Endothelial cell of umbilical vein (primary cell): ENCODE measurements at regions of chr21 and their contacts with region 1.

Region 1: GRCh38 chr21:41816220-41817165 is 49.6 kb upstream of the RIPK4 start:
- DNase-seq: peak; percentile 54
- H3K4me3 ChIP-seq: no peak overlapping the region
- H3K27ac ChIP-seq: no peak overlapping the region
- H3K4me1 ChIP-seq: no peaks in the 10 kb centered on the region
- H3K27me3 ChIP-seq: no peaks in the 10 kb centered on the region
- CTCF ChIP-seq: peak; percentile 82 to 90
- POLR2A ChIP-seq: no peak

Region 2: DNA sequence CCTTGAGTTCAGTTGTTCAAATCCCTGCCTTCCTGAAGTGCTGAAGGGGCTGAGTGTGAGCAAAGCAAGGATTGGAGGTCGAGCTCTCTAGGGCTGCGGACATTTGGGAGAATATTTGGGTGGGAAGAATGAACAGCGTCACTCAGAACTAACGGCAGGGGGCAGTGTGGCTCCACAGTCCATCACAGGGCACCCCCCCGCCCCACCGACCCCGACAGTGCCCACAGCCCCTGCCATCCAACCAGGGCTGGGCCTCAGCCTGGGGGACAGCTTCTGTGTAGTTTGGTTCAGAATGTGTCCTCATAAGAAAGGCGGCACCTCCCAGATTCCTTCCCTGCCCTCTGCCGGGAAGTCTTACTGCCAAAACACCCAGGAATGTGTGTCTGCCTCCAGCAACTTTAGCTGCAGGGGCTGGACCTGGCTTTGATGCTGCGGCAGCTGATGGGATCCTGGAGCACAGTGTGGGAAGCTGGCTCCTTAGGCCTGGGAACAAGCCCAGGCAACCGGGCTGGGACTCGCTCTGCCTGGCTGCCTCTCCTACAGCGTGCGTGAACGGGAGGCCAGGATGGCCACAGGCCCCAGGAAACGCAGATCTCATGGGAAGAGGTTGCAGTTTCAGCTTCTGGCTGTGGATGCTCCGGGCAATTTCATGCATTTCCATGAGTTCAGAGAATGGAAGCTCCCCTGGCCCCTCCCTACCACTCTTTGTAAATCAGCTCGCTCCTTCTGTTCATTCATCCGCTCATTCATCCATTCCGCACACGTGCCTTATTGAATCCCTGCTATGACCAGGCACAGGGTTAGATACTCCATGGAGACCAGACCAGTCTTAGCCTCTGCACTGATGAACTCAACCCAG is 203.6 kb before region 1 on chr21:
- CTCF ChIA-PET with region 1: interaction called, 18 read pairs
- POLR2A ChIA-PET with region 1: no interaction called
- dilution Hi-C with region 1: no loop called
- intact Hi-C with region 1: loop called (anchors 1 kb)
- DNase-seq: no peak
- H3K4me3 ChIP-seq: no peak overlapping the region
- H3K27ac ChIP-seq: no peak overlapping the region
- H3K4me1 ChIP-seq: no peaks in the 10 kb centered on the region
- H3K27me3 ChIP-seq: peaks cover 0 to 2% of the 10 kb centered on the region in 2 experiments
- CTCF ChIP-seq: peak; percentile 50 to 76
- POLR2A ChIP-seq: no peak

Region 3: DNA sequence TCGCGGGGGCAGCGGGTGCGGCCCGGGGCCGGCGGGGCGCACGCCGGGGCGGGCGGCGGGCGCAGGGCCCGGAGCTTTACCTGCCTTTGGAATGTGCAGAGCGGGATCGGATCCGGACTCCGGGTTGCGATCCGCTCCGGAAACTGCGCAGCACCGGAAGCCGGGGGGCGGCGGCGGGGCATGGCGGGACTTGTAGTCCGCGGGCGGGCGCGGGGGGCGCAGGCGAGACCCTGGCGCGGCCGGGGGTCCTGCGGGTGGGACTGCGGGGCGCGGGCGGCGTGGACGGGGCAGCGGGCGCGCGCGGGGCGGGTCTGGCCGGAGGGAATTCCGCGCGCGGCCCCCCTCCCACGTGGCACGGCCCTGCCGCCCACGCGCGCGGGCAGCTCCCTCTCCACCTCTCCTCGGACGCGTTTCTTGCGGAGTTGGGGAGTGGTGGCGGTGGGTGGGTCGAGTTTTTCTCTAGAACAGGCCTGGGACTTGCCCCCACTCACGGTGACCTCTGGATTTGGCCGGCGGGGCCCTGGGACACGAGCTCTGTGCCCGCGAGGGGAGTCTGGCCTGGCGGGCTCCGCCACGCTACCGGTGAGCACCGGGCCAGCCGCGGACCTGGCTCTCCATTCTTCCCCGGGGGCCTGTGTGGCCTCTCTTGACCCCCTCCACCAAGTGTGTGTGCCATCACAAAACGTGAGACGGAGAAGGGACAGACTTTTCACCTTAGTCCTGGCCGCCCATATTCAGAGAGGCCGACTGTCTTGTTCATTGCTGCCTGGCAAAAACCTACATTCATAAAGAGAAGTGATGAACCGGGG is 62.9 kb after region 1 on chr21 and contains the start of gene PRDM15:
- CTCF ChIA-PET with region 1: interaction called, 12 read pairs
- POLR2A ChIA-PET with region 1: no interaction called
- dilution Hi-C with region 1: no loop called
- intact Hi-C with region 1: no loop called
- DNase-seq: peak; percentile 46
- H3K4me3 ChIP-seq: peak within 1 kb of the TSS; percentile 57 to 94 (median 88)
- H3K27ac ChIP-seq: peak within 1 kb of the TSS; percentile 83
- H3K4me1 ChIP-seq: peaks cover 12% of the 10 kb centered on the region
- H3K27me3 ChIP-seq: no peaks in the 10 kb centered on the region
- CTCF ChIP-seq: no peak
- POLR2A ChIP-seq: peak; percentile 32
- total RNA-seq, gene PRDM15: 10.0 and 12.9 TPM in 2 replicates

Region 4: GRCh38 chr21:41926117-41926806 is 109.8 kb after region 1 on chr21:
- CTCF ChIA-PET with region 1: interaction called, 12 read pairs
- POLR2A ChIA-PET with region 1: interaction called, 3 read pairs
- dilution Hi-C with region 1: no loop called
- intact Hi-C with region 1: no loop called
- DNase-seq: peak; percentile 84
- H3K4me3 ChIP-seq: peak overlapping the region; percentile 0 to 40 (median 14)
- H3K27ac ChIP-seq: peak overlapping the region; percentile 62
- H3K4me1 ChIP-seq: peaks cover 13% of the 10 kb centered on the region
- H3K27me3 ChIP-seq: no peaks in the 10 kb centered on the region
- CTCF ChIP-seq: no peak
- POLR2A ChIP-seq: no peak

Region 5: GRCh38 chr21:41933313-41934086 is 117.0 kb after region 1 on chr21:
- CTCF ChIA-PET with region 1: interaction called, 46 read pairs
- POLR2A ChIA-PET with region 1: interaction called, 3 read pairs
- dilution Hi-C with region 1: no loop called
- intact Hi-C with region 1: loop called (anchors 1 kb)
- DNase-seq: peak; percentile 78
- H3K4me3 ChIP-seq: peak overlapping the region in 2 of 3 experiments; percentile 15 to 49
- H3K27ac ChIP-seq: peak overlapping the region; percentile 80
- H3K4me1 ChIP-seq: peaks cover 26% of the 10 kb centered on the region
- H3K27me3 ChIP-seq: no peaks in the 10 kb centered on the region
- CTCF ChIP-seq: peak; percentile 38 to 44
- POLR2A ChIP-seq: no peak

Region 6: DNA sequence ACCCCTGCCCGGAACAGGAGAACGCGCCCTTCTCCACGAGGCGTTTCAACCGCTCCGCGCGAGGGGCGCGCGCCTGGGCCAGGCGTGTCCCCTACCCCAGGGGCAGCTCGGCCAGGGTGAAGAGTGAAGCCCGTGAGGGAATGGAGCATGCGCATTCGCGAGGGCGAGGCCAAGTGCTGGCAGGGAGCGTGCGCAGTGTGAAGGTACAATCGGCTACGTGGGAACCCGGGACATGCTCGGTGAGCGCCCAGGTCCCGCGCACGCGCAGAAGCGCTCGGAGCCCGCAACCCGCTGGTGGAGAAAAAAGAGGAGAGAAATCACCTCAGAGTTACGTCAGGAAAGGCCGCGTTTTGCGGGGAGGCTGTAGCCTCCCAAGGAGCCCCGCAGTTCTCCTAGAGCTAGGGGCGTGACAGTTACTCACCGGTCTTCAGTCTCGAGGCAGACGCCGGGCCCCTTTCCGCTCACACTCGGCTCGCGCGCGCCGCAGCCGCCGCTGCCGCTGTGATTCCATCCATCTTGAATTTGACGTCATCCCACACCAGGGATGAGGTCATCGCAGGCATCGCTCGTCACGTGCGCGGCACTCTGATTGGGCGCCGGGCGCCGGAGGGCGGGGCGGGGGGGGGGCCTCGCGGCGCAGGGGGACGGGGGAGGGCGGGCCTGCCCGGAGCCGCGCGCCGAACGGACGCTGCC is 193.5 kb after region 1 on chr21 and contains the start of gene ZBTB21:
- CTCF ChIA-PET with region 1: interaction called, 3 read pairs
- POLR2A ChIA-PET with region 1: no interaction called
- dilution Hi-C with region 1: no loop called
- intact Hi-C with region 1: loop called (anchors 5 kb)
- DNase-seq: peak; percentile 98
- H3K4me3 ChIP-seq: peak within 1 kb of the TSS; percentile 47 to 70 (median 55)
- H3K27ac ChIP-seq: peak within 1 kb of the TSS; percentile 70
- H3K4me1 ChIP-seq: peaks cover 15% of the 10 kb centered on the region
- H3K27me3 ChIP-seq: peaks cover 3 to 14% of the 10 kb centered on the region in 2 experiments
- CTCF ChIP-seq: no peak
- POLR2A ChIP-seq: peak; percentile 80
- total RNA-seq, gene ZBTB21: 10.8 and 12.4 TPM in 2 replicates

Region 7: DNA sequence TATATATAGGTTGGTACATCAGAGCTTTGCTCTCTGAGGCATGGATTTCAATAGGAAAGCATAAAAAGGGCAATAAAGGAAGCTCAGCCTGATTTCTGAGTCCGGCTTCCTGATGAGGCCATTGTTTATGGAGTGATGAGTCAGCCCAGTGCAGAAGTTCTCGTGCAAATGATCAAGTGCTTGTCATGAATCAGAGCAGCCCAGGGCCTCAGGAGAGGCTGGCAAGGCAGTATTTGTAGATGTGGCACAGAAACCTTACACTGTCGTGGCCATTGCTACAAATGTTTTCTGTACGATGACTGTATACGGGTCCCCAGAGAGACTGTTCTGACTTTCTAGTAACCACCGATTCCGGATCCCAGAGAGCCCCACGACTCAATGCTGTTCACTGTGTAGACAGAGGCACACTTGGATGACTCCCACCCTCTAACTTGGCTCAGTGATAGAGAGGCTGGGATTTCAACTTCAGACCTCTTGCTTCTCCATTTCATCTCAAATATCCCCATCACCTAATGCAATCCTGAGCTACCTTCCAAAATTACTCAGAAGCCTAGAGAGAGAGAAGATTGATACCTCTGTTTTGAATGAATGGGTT is 281.5 kb after region 1 on chr21:
- CTCF ChIA-PET with region 1: interaction called, 11 read pairs
- POLR2A ChIA-PET with region 1: no interaction called
- dilution Hi-C with region 1: no loop called
- intact Hi-C with region 1: no loop called
- DNase-seq: peak; percentile 97
- H3K4me3 ChIP-seq: no peak overlapping the region
- H3K27ac ChIP-seq: peak overlapping the region; percentile 85
- H3K4me1 ChIP-seq: peaks cover 13% of the 10 kb centered on the region
- H3K27me3 ChIP-seq: peaks cover under 1 to 7% of the 10 kb centered on the region in 2 experiments
- CTCF ChIP-seq: no peak
- POLR2A ChIP-seq: no peak